ENCODE measurements at regions of chr7 and their contacts with region 1.

Region 1: GRCh38 chr7:16420649-16421332 is 547 bp downstream of the CRPPA start:
- DNase-seq: peak; percentile 88 to 93 (median 89)
- ATAC-seq: peak; percentile 91 to 97 (median 93)
- H3K4me3 ChIP-seq: peak overlapping the region; percentile 54 to 82 (median 74)
- H3K27ac ChIP-seq: peak overlapping the region; percentile 94 to 99 (median 98)
- H3K4me1 ChIP-seq: peaks cover 0 to 21% (median 16%) of the 10 kb centered on the region in 12 donors
- H3K27me3 ChIP-seq: no peaks in the 10 kb centered on the region
- CTCF ChIP-seq: peak in 9 of 12 donors; percentile 11 to 48 (median 34)
- POLR2A ChIP-seq: peak in 1 of 2 donors; percentile 72

Region 2: GRCh38 chr7:16046041-16046440 is 374.8 kb before region 1 on chr7:
- intact Hi-C with region 1: no loop called
- DNase-seq: no peak
- ATAC-seq: no peak
- H3K4me3 ChIP-seq: no peak overlapping the region
- H3K27ac ChIP-seq: no peak overlapping the region
- H3K4me1 ChIP-seq: peaks cover 0 to 1% (median 0%) of the 10 kb centered on the region in 12 donors
- H3K27me3 ChIP-seq: no peaks in the 10 kb centered on the region
- CTCF ChIP-seq: no peak
- POLR2A ChIP-seq: no peak

Region 3: DNA sequence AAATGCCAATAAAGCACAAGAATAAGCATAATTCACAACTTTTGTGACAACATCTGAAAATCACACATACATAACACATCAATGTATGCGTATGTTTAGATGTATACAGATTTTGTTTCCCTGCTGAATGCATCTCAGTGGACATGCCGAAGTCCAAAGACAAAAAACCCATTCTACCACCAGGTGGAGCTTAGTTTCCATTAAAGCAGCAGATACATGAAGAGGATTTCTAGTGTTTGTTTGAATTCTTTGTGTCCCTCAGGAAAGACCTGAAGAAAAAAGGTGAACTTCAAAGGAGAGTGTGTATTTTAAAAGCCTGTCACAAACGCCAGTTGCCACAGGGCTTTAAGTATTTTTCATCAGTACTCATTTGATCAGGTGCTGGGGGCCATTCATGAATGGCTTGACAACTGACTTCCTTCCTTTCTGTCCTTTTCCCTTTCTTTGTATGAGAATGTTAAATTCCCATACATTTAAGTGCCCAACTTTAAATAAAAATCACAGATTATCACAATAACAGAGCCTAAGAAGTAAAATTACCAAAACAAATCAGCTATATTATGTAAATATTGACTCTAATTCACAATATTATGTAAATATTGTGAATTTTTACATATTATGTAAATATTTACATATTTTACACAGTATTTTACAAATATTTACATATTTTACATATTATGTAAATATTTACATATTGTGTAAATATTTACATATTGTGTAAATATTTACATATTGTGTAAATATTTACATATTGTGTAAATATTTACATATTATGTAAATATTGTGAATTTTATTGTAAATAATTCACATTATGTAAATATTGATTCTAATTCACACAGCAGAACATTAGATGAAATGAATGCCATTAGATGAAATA is 342.5 kb before region 1 on chr7:
- intact Hi-C with region 1: loop called in 1 of 10 experiments (anchors 5 kb)
- DNase-seq: peak in 1 of 5 donors; percentile 45
- ATAC-seq: peak in 2 of 4 donors; percentile 65 to 66
- H3K4me3 ChIP-seq: no peak overlapping the region
- H3K27ac ChIP-seq: no peak overlapping the region
- H3K4me1 ChIP-seq: peaks cover 0 to 4% (median 0%) of the 10 kb centered on the region in 12 donors
- H3K27me3 ChIP-seq: no peaks in the 10 kb centered on the region
- CTCF ChIP-seq: peak; percentile 52 to 86 (median 74)
- POLR2A ChIP-seq: no peak

Region 4: GRCh38 chr7:16098585-16099179 is 322.1 kb before region 1 on chr7:
- intact Hi-C with region 1: loop called in 1 of 10 experiments (anchors 10 kb)
- DNase-seq: no peak
- ATAC-seq: no peak
- H3K4me3 ChIP-seq: no peak overlapping the region
- H3K27ac ChIP-seq: peak overlapping the region in 1 of 12 donors; percentile 17
- H3K4me1 ChIP-seq: peaks cover 0 to 25% (median 8%) of the 10 kb centered on the region in 12 donors
- H3K27me3 ChIP-seq: no peaks in the 10 kb centered on the region
- CTCF ChIP-seq: peak; percentile 69 to 91 (median 82)
- POLR2A ChIP-seq: no peak

Region 5: DNA sequence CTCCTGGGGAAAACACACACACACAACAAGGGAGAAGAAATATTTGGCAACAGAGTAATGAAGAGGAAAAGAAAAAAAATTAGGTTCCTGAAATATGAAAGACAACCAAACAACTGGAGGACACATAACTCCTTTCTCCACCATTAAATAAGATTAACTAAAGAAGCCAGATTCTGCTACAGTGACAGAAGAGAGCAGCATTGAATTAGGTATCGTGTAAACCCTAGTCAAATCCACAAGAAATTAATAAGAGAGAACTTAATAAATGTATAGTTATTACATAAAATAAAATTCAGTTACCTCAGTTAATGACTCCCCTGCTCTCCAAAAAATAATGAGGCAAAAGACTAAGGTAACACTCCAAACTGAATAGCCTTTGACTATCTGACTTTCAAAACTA is 306.2 kb before region 1 on chr7:
- intact Hi-C with region 1: loop called in 8 of 10 experiments (anchors 5 to 10 kb)
- DNase-seq: no peak
- ATAC-seq: peak in 1 of 4 donors; percentile 46
- H3K4me3 ChIP-seq: no peak overlapping the region
- H3K27ac ChIP-seq: no peak overlapping the region
- H3K4me1 ChIP-seq: no peaks in the 10 kb centered on the region
- H3K27me3 ChIP-seq: no peaks in the 10 kb centered on the region
- CTCF ChIP-seq: peak; percentile 16 to 62 (median 46)
- POLR2A ChIP-seq: no peak

Region 6: GRCh38 chr7:16129431-16130116 is 291.2 kb before region 1 on chr7:
- intact Hi-C with region 1: loop called in 2 of 10 experiments (anchors 5 kb)
- DNase-seq: no peak
- ATAC-seq: peak in 1 of 4 donors; percentile 31
- H3K4me3 ChIP-seq: no peak overlapping the region
- H3K27ac ChIP-seq: peak overlapping the region in 10 of 12 donors; percentile 14 to 74 (median 52)
- H3K4me1 ChIP-seq: peaks cover 0 to 26% (median 14%) of the 10 kb centered on the region in 12 donors
- H3K27me3 ChIP-seq: no peaks in the 10 kb centered on the region
- CTCF ChIP-seq: no peak
- POLR2A ChIP-seq: no peak

Region 7: DNA sequence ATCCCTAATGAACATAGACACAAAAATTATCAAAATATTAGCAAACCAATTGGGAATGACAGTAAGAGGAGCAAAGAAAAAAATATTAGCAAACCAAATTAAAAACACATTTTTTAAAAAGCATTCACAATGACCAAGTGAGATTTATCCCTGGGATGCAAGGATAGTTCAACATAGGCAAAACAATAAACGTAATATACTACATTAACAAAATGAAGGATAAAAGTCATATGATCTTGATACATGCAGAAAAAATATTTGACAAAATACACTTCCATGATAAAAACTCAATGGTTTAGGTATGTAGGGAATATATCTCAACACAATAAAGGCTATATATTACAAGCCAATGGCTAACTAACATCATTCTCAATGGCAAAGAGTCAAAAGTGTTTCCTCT is 82.7 kb before region 1 on chr7:
- intact Hi-C with region 1: no loop called
- DNase-seq: no peak
- ATAC-seq: no peak
- H3K4me3 ChIP-seq: no peak overlapping the region
- H3K27ac ChIP-seq: no peak overlapping the region
- H3K4me1 ChIP-seq: peaks cover 0 to 6% (median 0%) of the 10 kb centered on the region in 12 donors
- H3K27me3 ChIP-seq: no peaks in the 10 kb centered on the region
- CTCF ChIP-seq: no peak
- POLR2A ChIP-seq: no peak

Region 8: DNA sequence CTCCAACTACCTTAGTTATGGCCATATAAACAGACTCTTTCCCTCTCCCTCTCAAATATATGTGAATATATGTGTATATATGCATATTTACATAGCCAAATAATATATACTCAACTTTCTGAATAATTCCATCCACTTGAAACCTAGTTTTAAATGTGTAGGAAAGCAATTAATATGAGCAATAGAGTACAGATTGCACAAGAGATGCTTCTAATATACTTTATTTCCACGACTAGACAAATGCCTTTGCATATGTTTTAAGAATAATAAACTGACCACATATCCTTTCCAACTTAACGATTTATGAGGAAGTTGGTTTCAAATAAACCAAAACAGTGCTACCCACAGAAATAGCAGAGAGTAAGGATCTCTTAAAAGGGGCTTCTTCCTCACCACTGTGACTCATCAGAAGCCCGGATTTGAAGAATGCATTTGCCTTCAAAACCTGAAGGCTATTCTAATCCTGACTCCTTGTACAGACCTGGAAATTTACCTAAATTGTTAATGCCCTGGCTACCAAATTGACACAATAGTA is 1144.0 kb after region 1 on chr7:
- intact Hi-C with region 1: no loop called
- DNase-seq: no peak
- ATAC-seq: no peak
- H3K4me3 ChIP-seq: no peak overlapping the region
- H3K27ac ChIP-seq: no peak overlapping the region
- H3K4me1 ChIP-seq: no peaks in the 10 kb centered on the region
- H3K27me3 ChIP-seq: peaks cover 0 to 3% (median 0%) of the 10 kb centered on the region in 9 donors
- CTCF ChIP-seq: no peak
- POLR2A ChIP-seq: no peak